CD8-positive, alpha-beta T cell (primary cell): ENCODE measurements at regions of chr22 and their contacts with region 1.

Region 1: DNA sequence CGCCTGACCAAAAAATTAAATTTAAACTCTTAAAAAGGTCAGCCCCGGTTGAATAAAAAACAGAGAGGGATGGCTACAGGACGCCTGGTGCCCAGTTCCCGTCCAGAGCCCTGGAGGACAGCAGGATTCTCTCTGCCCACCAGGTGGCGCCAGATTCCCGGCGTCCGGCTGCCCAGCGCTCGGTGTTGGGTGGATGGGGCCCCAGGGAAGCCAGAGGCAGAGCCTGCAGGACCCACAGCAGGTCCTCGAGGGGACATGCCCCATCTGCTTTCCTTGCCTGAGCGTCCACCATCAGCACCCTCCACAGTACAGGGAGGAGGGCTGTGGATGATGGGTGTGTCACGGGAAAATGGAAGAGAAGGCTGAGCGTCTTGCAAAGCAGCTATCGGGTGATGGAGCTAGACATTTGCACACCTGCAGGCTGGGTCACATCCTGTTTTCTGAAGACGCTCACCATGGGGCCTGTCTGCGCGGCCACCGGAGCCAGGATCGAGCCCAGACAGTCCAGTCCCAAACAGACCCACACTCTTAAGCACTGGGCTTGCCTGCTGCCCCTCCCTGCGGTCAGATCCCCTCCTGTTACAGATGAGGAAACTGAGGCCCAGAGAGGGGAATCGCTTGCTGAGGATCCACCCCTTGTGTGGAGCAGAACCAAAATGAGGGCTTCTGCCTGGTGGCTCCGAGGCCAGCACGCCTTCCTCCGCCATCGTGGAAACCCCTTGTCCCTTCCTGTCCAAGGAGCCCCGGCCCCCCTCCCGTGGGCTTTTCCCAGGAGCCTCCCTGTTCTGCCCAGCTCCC is 18.5 kb upstream of the CBX7 start:
- DNase-seq: peak; percentile 73 to 95 (median 85)
- ATAC-seq: peak; percentile 57
- H3K4me3 ChIP-seq: peak overlapping the region; percentile 26 to 28
- H3K4me3 Mint-ChIP-seq: peak overlapping the region; percentile 54
- H3K27ac ChIP-seq: peak overlapping the region; percentile 25 to 42
- H3K27ac Mint-ChIP-seq: peak overlapping the region; percentile 94
- H3K4me1 ChIP-seq: peaks cover 49% of the 10 kb centered on the region
- H3K4me1 Mint-ChIP-seq: peaks cover 47% of the 10 kb centered on the region
- H3K27me3 ChIP-seq: peaks cover 0 to 3% of the 10 kb centered on the region in 2 experiments
- H3K27me3 Mint-ChIP-seq: no peaks in the 10 kb centered on the region
- CTCF ChIP-seq: peak; percentile 98

Region 2: GRCh38 chr22:39152511-39153219 is 18.4 kb before region 1 on chr22 and contains the start of gene CBX7:
- CTCF ChIA-PET with region 1: interaction called, 18 read pairs
- POLR2A ChIA-PET with region 1: interaction called, 9 read pairs
- intact Hi-C with region 1: loop called (anchors 1 to 2 kb)
- DNase-seq: peak; percentile 84 to 99 (median 92)
- ATAC-seq: peak; percentile 82
- H3K4me3 ChIP-seq: peak within 1 kb of the TSS; percentile 83 to 89
- H3K4me3 Mint-ChIP-seq: peak within 1 kb of the TSS; percentile 92
- H3K27ac ChIP-seq: peak within 1 kb of the TSS; percentile 86 to 87
- H3K27ac Mint-ChIP-seq: peak within 1 kb of the TSS; percentile 91
- H3K4me1 ChIP-seq: peaks cover 51% of the 10 kb centered on the region
- H3K4me1 Mint-ChIP-seq: peaks cover 42% of the 10 kb centered on the region
- H3K27me3 ChIP-seq: no peaks in the 10 kb centered on the region
- H3K27me3 Mint-ChIP-seq: no peaks in the 10 kb centered on the region
- CTCF ChIP-seq: no peak
- total RNA-seq, gene CBX7: 34.2 to 37.2 TPM

Region 3: GRCh38 chr22:39205338-39206021 is 34.5 kb after region 1 on chr22:
- CTCF ChIA-PET with region 1: interaction called, 6 read pairs
- POLR2A ChIA-PET with region 1: interaction called, 9 read pairs
- intact Hi-C with region 1: loop called in 1 of 2 experiments (anchors 5 kb)
- DNase-seq: peak; percentile 18 to 89 (median 61)
- ATAC-seq: peak; percentile 82
- H3K4me3 ChIP-seq: peak overlapping the region in 1 of 2 experiments; percentile 7
- H3K4me3 Mint-ChIP-seq: peak overlapping the region; percentile 22
- H3K27ac ChIP-seq: peak overlapping the region in 1 of 2 experiments; percentile 21
- H3K27ac Mint-ChIP-seq: peak overlapping the region; percentile 84
- H3K4me1 ChIP-seq: peaks cover 7% of the 10 kb centered on the region
- H3K4me1 Mint-ChIP-seq: peaks cover 21% of the 10 kb centered on the region
- H3K27me3 ChIP-seq: no peaks in the 10 kb centered on the region
- H3K27me3 Mint-ChIP-seq: peaks cover 2% of the 10 kb centered on the region
- CTCF ChIP-seq: no peak

Region 4: DNA sequence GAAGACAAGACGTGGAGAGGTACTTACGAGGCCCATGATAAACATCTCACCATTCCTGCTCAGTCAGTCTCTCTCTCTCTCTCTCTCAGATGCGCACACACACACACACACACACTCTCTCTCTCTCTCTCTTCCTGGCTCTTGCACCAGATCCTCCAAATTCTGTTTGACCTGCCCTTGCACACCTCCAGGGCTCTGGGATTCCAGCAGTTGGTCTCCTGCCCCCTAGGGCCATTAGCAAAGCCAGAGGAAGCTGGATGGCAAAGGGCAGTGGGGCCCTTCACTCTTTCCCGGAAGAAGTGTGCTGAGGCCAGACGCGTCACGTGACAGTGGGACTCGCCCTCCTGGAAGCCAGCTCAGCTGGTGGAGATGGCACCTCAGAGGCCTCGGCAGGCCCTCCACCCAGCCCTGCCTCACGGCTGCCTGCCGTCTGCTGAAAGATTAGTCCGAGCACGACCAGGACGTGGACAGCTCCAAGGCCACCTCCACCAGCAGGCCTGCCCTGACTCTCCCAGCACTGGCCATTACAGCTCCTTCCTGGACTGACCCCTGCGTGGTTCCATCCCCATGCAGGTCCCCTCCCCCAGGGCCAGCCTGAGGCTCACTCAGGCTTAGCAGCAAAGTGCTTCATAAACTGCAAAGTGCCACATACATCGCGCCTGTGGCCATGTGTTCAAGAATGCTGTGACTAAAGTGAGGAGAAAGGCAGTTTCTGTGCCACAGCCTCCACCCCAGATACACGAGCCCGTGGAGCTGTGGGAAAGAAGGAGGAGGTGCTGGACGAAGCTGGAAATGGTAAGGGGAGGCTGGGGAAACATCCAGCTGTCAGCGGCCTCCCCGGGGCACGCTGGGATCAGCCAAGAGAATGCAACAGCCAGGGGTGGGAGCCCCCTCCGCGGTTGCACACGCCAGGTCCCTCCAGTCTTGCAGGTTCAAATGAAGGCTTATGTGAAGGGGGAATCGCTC is 70.1 kb after region 1 on chr22:
- CTCF ChIA-PET with region 1: interaction called, 7 read pairs
- POLR2A ChIA-PET with region 1: interaction called, 19 read pairs
- intact Hi-C with region 1: loop called (anchors 2 kb)
- DNase-seq: peak in 6 of 9 experiments; percentile 14 to 76 (median 60)
- ATAC-seq: peak; percentile 9
- H3K4me3 ChIP-seq: peak overlapping the region; percentile 17 to 44
- H3K4me3 Mint-ChIP-seq: peak overlapping the region; percentile 93
- H3K27ac ChIP-seq: peak overlapping the region; percentile 21 to 54
- H3K27ac Mint-ChIP-seq: peak overlapping the region; percentile 95
- H3K4me1 ChIP-seq: peaks cover 60% of the 10 kb centered on the region
- H3K4me1 Mint-ChIP-seq: peaks cover 65% of the 10 kb centered on the region
- H3K27me3 ChIP-seq: peaks cover 3 to 20% of the 10 kb centered on the region in 2 experiments
- H3K27me3 Mint-ChIP-seq: peaks cover 2% of the 10 kb centered on the region
- CTCF ChIP-seq: no peak

Region 5: DNA sequence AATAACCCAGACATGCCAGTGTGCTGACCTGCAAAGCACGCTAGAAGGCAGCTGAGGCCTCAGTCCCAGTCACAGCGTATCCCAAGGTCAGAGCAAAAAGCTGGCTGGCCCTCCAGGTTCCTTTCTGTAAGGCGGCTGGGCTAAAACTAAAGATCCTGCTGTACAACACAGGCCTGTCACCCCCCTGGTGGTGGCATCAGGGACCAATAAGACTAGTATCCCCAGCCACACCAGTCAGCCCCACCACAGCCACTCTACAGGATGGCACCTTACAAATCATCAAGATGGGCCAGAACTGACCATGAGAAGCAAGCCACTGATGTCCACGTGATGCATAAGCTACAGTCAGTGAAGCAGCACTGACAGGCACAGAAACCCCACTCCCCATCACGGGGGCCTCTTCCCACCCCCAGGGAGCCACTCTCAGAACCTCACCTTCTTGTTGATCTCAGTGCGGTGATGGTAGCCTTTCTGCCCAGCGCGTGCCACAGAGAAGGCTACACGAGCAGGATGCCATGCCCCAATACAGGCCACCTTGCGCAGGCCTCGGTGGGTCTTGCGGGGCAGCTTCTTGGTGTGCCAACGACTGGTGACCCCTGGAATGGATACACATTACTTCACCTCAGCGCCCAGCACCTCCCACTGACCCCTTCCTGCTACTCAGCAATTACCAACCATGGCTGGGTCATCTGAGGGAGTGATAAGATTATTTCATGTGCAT is 143.4 kb after region 1 on chr22:
- CTCF ChIA-PET with region 1: interaction called, 386 read pairs
- POLR2A ChIA-PET with region 1: interaction called, 160 read pairs
- intact Hi-C with region 1: loop called (anchors 1 kb)
- DNase-seq: peak in 1 of 9 experiments; percentile 32
- ATAC-seq: no peak
- H3K4me3 ChIP-seq: no peak overlapping the region
- H3K4me3 Mint-ChIP-seq: no peak overlapping the region
- H3K27ac ChIP-seq: no peak overlapping the region
- H3K27ac Mint-ChIP-seq: no peak overlapping the region
- H3K4me1 ChIP-seq: peaks cover 48% of the 10 kb centered on the region
- H3K4me1 Mint-ChIP-seq: peaks cover 46% of the 10 kb centered on the region
- H3K27me3 ChIP-seq: no peaks in the 10 kb centered on the region
- H3K27me3 Mint-ChIP-seq: no peaks in the 10 kb centered on the region
- CTCF ChIP-seq: no peak